Naive thymus-derived CD4-positive, alpha-beta T cell (primary cell): ENCODE measurements at regions of chr7 and their contacts with region 1.

Region 1: GRCh38 chr7:66826649-66827048 is 86.1 kb downstream of the RABGEF1 start:
- DNase-seq: no peak
- ATAC-seq: no peak
- H3K4me3 ChIP-seq: no peak overlapping the region
- H3K4me3 Mint-ChIP-seq: no peak overlapping the region
- H3K27ac ChIP-seq: no peak overlapping the region
- H3K27ac Mint-ChIP-seq: no peak overlapping the region
- H3K4me1 ChIP-seq: no peaks in the 10 kb centered on the region
- H3K4me1 Mint-ChIP-seq: no peaks in the 10 kb centered on the region
- H3K27me3 ChIP-seq: no peaks in the 10 kb centered on the region
- H3K27me3 Mint-ChIP-seq: no peaks in the 10 kb centered on the region

Region 2: DNA sequence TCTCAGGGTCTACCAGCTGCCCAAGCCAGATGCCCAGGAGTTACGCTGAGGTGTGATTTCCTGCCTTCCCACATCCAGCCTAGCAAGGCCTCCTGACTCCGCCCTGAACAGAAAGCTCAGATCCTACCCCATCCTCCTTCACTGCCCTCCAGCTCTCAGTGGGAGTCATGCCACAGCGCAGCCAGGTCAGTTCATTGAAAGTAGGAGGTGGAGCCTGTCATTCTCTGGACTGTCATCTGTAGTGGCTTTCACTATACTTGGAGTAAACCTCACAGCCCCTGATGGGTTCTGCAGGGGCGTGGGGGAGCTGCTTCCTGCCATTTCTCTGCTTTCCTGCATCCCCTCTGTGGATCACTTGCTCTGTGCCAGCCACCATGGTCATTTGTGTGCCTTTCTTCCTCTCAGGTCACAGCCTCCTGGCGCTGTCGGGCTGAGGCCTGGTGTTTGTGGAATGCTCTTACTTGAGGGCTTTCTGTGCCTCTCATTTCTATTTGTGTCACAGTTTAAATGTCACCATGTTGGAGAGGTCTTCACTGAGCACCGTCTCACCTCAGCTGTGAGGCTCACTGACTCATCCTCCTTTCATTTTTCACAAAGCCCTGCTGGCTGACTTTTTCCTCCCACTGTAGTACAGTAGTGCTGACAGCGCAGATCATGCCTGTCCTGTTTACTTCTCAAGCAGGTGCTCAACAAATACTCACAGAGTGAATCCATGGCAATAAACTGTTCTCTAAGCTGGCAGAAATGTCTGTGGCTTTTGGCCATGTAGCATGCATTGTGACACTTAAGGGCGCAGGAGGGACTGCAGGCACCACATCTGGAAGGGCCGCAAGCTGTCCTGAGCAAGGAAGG is 33.4 kb after region 1 on chr7:
- CTCF ChIA-PET with region 1: no interaction called
- POLR2A ChIA-PET with region 1: no interaction called
- intact Hi-C with region 1: loop called in 1 of 2 experiments (anchors 5 kb)
- DNase-seq: peak in 1 of 9 donors; percentile 42
- ATAC-seq: no peak
- H3K4me3 ChIP-seq: no peak overlapping the region
- H3K4me3 Mint-ChIP-seq: peak overlapping the region in 2 of 10 donors; percentile 1 to 80
- H3K27ac ChIP-seq: no peak overlapping the region
- H3K27ac Mint-ChIP-seq: peak overlapping the region in 5 of 9 donors; percentile 5 to 95 (median 62)
- H3K4me1 ChIP-seq: no peaks in the 10 kb centered on the region
- H3K4me1 Mint-ChIP-seq: peaks cover 0 to 16% (median 4%) of the 10 kb centered on the region in 7 donors
- H3K27me3 ChIP-seq: no peaks in the 10 kb centered on the region
- H3K27me3 Mint-ChIP-seq: no peaks in the 10 kb centered on the region

Region 3: DNA sequence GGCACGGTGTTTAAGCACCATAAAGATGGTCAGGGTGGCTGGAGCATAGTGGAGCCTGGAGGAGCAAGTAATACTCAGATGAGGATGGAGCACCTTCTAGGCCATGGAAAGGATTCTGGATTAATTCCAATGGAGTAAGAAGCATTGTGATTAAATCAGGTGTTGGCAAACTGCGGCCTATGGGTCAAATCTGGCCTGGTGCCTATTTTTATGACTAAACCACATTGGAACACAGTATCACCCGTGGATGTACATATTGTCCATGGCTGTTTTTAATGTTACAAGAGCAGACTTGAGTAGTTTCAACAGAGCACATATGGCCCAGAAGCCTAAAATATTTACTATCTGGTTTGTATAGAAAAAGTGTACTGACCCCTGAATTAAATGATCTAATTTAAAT is 44.4 kb after region 1 on chr7:
- CTCF ChIA-PET with region 1: no interaction called
- POLR2A ChIA-PET with region 1: no interaction called
- intact Hi-C with region 1: no loop called
- DNase-seq: no peak
- ATAC-seq: no peak
- H3K4me3 ChIP-seq: no peak overlapping the region
- H3K4me3 Mint-ChIP-seq: no peak overlapping the region
- H3K27ac ChIP-seq: no peak overlapping the region
- H3K27ac Mint-ChIP-seq: no peak overlapping the region
- H3K4me1 ChIP-seq: no peaks in the 10 kb centered on the region
- H3K4me1 Mint-ChIP-seq: no peaks in the 10 kb centered on the region
- H3K27me3 ChIP-seq: no peaks in the 10 kb centered on the region
- H3K27me3 Mint-ChIP-seq: no peaks in the 10 kb centered on the region